K562 (cell line): ENCODE measurements at regions of chr9 and their contacts with region 1.

Region 1: GRCh38 chr9:104093647-104094533 is at the start of gene SMC2:
- DNase-seq: peak; percentile 88 to 93 (median 90)
- ATAC-seq: peak; percentile 90
- H3K4me3 ChIP-seq: peak within 1 kb of the TSS; percentile 61
- H3K27ac ChIP-seq: peak within 1 kb of the TSS; percentile 98
- H3K4me1 ChIP-seq: peaks cover 0 to 16% of the 10 kb centered on the region in 2 experiments; a peak in 3 of 5 replicates
- H3K27me3 ChIP-seq: no peaks in the 10 kb centered on the region
- CTCF ChIP-seq: no peak
- EP300 ChIP-seq: no peak
- POLR2A ChIP-seq: peak; percentile 97
- RAD21 ChIP-seq: no peak
- polyA plus RNA-seq, gene SMC2: 34.3 to 54.0 TPM

Region 2: GRCh38 chr9:104256031-104256709 is 162.3 kb after region 1 on chr9:
- CTCF ChIA-PET with region 1: no interaction called
- POLR2A ChIA-PET with region 1: no interaction called
- in situ Hi-C with region 1: no loop called
- intact Hi-C with region 1: no loop called
- DNase-seq: no peak
- ATAC-seq: no peak
- H3K4me3 ChIP-seq: no peak overlapping the region
- H3K27ac ChIP-seq: no peak overlapping the region
- H3K4me1 ChIP-seq: no peaks in the 10 kb centered on the region
- H3K27me3 ChIP-seq: no peaks in the 10 kb centered on the region
- CTCF ChIP-seq: no peak
- EP300 ChIP-seq: no peak
- POLR2A ChIP-seq: no peak
- RAD21 ChIP-seq: no peak

Region 3: GRCh38 chr9:104279535-104280190 is 185.8 kb after region 1 on chr9:
- CTCF ChIA-PET with region 1: no interaction called
- POLR2A ChIA-PET with region 1: no interaction called
- in situ Hi-C with region 1: no loop called
- intact Hi-C with region 1: no loop called
- DNase-seq: no peak
- ATAC-seq: no peak
- H3K4me3 ChIP-seq: no peak overlapping the region
- H3K27ac ChIP-seq: no peak overlapping the region
- H3K4me1 ChIP-seq: no peaks in the 10 kb centered on the region
- H3K27me3 ChIP-seq: no peaks in the 10 kb centered on the region
- CTCF ChIP-seq: no peak
- EP300 ChIP-seq: no peak
- POLR2A ChIP-seq: no peak
- RAD21 ChIP-seq: no peak

Region 4: DNA sequence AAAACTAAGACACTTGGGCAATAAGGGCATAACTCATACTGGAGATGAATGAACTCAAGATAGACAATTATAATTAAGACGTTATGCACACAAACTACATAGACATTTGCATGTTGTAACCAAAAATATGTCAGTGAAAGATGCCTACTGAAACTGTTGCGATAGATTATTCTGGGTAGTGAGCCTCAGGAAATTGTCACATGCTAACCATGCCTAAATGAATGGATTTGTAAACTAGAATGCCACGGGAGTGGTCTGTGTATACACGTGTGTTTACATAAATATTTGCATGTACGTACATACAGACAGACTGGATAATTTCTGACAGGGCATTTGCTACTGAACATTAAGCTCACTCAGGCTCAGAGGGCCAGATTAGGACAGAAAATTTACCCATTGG is 671.2 kb after region 1 on chr9:
- CTCF ChIA-PET with region 1: no interaction called
- POLR2A ChIA-PET with region 1: no interaction called
- in situ Hi-C with region 1: no loop called
- intact Hi-C with region 1: loop called (anchors 5 kb)
- DNase-seq: no peak
- ATAC-seq: no peak
- H3K4me3 ChIP-seq: no peak overlapping the region
- H3K27ac ChIP-seq: no peak overlapping the region
- H3K4me1 ChIP-seq: peaks cover 4 to 11% of the 10 kb centered on the region in 2 experiments; a peak in 4 of 5 replicates
- H3K27me3 ChIP-seq: no peaks in the 10 kb centered on the region
- CTCF ChIP-seq: no peak
- EP300 ChIP-seq: no peak
- POLR2A ChIP-seq: no peak
- RAD21 ChIP-seq: no peak

Region 5: DNA sequence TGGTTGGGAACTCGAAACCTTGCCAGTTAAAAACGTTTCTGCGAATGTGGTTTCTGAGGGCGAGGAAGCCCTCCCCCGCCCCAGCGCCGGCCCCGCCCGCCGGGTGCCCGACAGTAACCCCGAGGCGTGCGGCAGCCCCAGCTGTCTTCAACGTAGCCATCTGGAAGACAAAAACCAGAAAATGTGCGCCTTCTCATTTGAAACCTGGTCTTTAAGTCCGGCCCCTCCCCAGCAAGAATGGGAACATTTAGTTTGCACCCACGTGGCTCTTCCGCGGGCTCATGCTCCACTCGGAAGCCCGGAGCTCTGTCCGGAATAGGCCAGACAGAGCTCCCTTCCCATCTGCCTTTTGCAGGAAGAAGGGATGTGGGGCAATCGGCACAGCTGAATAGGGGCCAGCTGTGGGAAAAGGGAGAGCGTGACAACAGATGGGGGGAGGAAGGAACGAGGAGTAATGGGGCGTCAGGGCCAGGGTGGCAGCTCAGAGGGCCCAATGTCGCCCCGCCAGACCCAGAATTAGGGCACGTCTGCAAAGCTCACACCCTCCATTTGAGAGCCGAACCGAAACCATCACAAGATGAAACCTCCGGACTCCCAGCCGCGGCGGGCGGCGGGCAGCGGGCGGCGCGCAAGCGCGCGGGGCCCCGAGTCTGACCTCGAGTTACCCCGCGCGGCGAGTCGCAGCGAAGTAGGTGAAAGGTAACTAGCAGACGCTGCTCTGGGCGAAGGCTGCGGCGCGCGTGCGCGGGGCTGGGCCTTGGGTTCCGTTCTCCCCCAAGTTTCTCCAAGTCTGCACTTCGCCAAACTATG is 897.5 kb after region 1 on chr9:
- CTCF ChIA-PET with region 1: no interaction called
- POLR2A ChIA-PET with region 1: no interaction called
- in situ Hi-C with region 1: no loop called
- intact Hi-C with region 1: loop called (anchors 10 kb)
- DNase-seq: peak; percentile 67 to 87 (median 80)
- ATAC-seq: peak; percentile 94
- H3K4me3 ChIP-seq: peak overlapping the region; percentile 48
- H3K27ac ChIP-seq: peak overlapping the region; percentile 68; the same call in 2 of the 3 replicates
- H3K4me1 ChIP-seq: peaks cover 15 to 16% of the 10 kb centered on the region in 2 experiments
- H3K27me3 ChIP-seq: peaks cover 0 to 4% of the 10 kb centered on the region in 2 experiments; a peak in 1 of 5 replicates
- CTCF ChIP-seq: no peak
- EP300 ChIP-seq: no peak
- POLR2A ChIP-seq: no peak
- RAD21 ChIP-seq: no peak